ENCODE measurements at regions of chr6 and their contacts with region 1.

Region 1: GRCh38 chr6:32952817-32953739 is at the start of gene HLA-DMA:
- DNase-seq: peak; percentile 88
- ATAC-seq: peak; percentile 98
- H3K4me3 Mint-ChIP-seq: peak within 1 kb of the TSS; percentile 79
- H3K27ac Mint-ChIP-seq: peak within 1 kb of the TSS; percentile 86
- H3K4me1 Mint-ChIP-seq: peaks cover 59% of the 10 kb centered on the region
- H3K27me3 Mint-ChIP-seq: no peaks in the 10 kb centered on the region
- total RNA-seq, gene HLA-DMA: 57.9 to 60.9 TPM

Region 2: DNA sequence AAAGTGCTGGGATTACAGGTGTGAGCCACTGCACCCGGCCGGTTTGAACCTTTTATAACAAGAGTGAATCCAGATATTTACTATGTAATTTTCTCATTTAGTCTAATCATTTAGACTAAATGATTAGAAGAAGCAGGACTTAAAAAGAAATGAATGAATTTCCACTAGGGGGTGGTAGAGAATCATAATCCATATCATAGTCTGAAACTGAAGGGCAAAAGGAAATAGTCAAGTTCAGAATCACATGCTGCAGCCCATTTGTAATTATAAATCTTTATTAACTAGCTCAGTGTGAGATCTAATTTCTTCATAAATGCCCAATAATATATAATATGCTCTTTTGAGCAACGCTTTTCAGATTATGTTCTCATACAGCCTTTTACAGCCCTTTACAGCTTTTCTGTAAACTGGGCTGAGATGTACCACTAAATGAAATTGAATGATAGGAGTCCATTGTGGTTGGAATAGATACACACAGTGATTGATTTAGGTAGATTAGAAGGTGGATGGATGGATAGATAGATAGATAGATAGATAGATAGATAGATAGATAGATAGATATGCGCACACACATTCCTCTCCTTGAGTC is 67.3 kb before region 1 on chr6:
- CTCF ChIA-PET with region 1: interaction called, 29 read pairs
- DNase-seq: no peak
- ATAC-seq: peak; percentile 73
- H3K4me3 Mint-ChIP-seq: no peak overlapping the region
- H3K27ac Mint-ChIP-seq: no peak overlapping the region
- H3K4me1 Mint-ChIP-seq: peaks cover 3% of the 10 kb centered on the region
- H3K27me3 Mint-ChIP-seq: peaks cover 11% of the 10 kb centered on the region

Region 3: DNA sequence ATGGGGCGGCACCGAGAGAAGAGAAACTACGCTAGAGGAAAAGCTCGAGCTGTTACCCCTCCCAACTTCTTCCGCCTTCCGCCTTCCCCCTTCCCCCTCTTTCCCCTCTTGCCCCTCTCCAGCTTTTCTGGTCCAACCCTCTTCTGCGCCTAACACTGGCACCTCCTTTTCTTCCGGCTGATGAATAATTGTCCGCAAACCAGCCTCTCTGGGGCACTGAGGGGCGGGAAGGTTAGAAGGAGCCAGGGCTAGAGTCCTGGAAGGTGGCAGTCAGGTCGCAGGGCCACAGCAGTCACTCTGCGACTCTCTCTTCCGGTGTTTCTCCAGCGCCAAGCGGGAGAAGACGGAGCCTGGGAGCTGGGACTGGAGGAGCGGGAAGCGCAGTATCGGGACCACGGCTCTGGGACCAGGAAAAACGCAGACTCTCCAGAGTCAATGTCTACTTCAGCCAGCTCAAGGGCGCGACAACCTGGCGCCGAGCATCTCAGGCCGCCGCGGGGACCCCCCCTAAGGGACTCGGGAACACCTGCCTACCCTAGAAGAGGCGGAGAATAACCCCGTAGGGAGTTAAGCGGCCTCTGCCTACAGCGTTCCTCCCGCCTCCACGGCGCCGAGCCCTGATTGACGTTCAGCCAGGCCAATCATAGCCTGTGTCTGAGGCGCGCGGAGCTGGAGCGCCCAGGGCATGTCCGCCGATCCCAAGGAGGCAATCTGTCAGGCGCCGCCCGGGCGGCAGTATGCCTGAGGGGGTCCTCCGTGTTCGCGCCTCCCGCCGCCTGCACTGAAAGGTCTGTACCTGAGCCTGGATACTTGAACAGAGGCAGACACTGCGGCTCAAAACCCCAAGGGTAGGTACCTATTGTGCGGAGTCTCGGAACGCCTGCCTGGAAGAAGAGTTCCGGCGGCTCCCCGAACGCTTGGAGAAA is 58.7 kb before region 1 on chr6:
- CTCF ChIA-PET with region 1: interaction called, 31 read pairs
- DNase-seq: peak; percentile 96
- ATAC-seq: peak; percentile 99
- H3K4me3 Mint-ChIP-seq: peak overlapping the region; percentile 99
- H3K27ac Mint-ChIP-seq: peak overlapping the region; percentile 94
- H3K4me1 Mint-ChIP-seq: peaks cover 37% of the 10 kb centered on the region
- H3K27me3 Mint-ChIP-seq: peaks cover 4% of the 10 kb centered on the region

Region 4: DNA sequence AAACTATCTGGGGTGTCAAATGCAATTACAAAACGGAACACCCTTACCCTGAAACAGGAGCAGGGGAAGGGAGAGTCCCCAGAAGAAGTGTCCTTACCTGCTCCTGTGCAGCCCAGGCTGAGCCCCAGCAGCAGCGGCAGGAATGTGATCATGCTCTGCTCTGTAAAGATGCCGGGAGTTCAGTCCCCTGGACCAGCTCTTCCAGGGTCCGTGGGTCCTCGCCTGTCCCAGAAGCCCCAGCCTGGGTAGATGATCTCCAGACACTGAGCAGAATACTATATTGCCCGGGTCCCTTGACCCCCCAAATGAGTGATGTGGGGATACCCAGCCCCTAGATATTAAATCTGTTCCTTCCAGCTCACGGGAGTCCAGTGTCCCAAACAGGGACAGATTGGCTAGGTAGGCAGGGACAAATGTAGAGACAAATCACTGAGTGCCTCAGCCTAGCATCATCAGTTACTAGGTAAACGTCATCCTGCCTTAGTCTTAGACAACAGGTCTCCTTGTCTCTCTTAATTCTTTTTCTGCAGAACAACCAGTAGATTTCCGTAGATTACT is 12.3 kb before region 1 on chr6 and contains the start of gene HLA-DMB:
- CTCF ChIA-PET with region 1: interaction called, 133 read pairs
- DNase-seq: peak; percentile 80
- ATAC-seq: peak; percentile 94
- H3K4me3 Mint-ChIP-seq: peak within 1 kb of the TSS; percentile 87
- H3K27ac Mint-ChIP-seq: peak within 1 kb of the TSS; percentile 98
- H3K4me1 Mint-ChIP-seq: peaks cover 67% of the 10 kb centered on the region
- H3K27me3 Mint-ChIP-seq: no peaks in the 10 kb centered on the region
- total RNA-seq, gene HLA-DMB: 22.7 to 31.2 TPM

Measured in activated CD8-positive, alpha-beta memory T cell treated with anti-CD3 and anti-CD28 coated beads, Interleukin-2, amount 10 ng/mL, durations not matched to agents 7 days and 5 days (primary cell).